Mucosa of descending colon (tissue), 3 donors: ENCODE measurements at regions of chr4 and their contacts with region 1.

Region 1: GRCh38 chr4:141350122-141350904 is 129.6 kb downstream of the ZNF330 start:
- DNase-seq: peak; percentile 54 to 92 (median 72)
- ATAC-seq: peak; percentile 97
- H3K4me3 ChIP-seq: no peak overlapping the region
- H3K4me1 ChIP-seq: peaks cover 4% of the 10 kb centered on the region
- CTCF ChIP-seq: no peak

Region 2: GRCh38 chr4:141220655-141221605 is 129.4 kb before region 1 on chr4 and contains the start of gene ZNF330:
- intact Hi-C with region 1: no loop called
- DNase-seq: peak; percentile 90 to 97 (median 96)
- ATAC-seq: peak; percentile 100
- H3K4me3 ChIP-seq: peak within 1 kb of the TSS; percentile 97
- H3K4me1 ChIP-seq: peaks cover 3% of the 10 kb centered on the region
- CTCF ChIP-seq: no peak
- total RNA-seq, gene ZNF330: 24.8 to 39.5 (median 24.9) TPM

Region 3: GRCh38 chr4:141294306-141294705 is 56.0 kb before region 1 on chr4:
- intact Hi-C with region 1: no loop called
- DNase-seq: no peak
- ATAC-seq: no peak
- H3K4me3 ChIP-seq: no peak overlapping the region
- H3K4me1 ChIP-seq: no peaks in the 10 kb centered on the region
- CTCF ChIP-seq: no peak

Region 4: DNA sequence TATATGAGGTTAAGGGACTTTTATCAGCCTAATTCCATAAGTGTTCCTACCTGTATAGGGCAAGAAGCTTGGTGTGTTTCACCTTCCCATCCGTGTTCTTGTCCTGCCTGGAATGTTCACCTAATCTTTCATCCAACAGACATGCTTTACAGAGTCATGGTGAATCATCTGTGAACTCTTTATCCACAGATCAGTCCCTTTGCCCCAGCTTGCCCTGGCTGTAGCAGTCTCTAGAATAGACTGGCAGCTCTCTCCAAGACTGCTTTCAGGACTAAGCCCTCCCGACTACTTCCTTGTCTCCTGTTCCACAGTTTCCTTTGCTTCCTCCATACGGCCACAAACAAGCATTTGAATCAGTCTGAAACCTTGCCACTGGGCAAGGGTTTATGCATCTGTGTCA is 108.2 kb after region 1 on chr4:
- intact Hi-C with region 1: no loop called
- DNase-seq: no peak
- ATAC-seq: no peak
- H3K4me3 ChIP-seq: no peak overlapping the region
- H3K4me1 ChIP-seq: no peaks in the 10 kb centered on the region
- CTCF ChIP-seq: no peak

Region 5: GRCh38 chr4:141676087-141676670 is 325.9 kb after region 1 on chr4:
- intact Hi-C with region 1: loop called in 1 of 2 experiments (anchors 5 kb)
- DNase-seq: peak in 1 of 3 donors; percentile 60
- ATAC-seq: peak; percentile 81
- H3K4me3 ChIP-seq: no peak overlapping the region
- H3K4me1 ChIP-seq: peaks cover 33% of the 10 kb centered on the region
- CTCF ChIP-seq: no peak

Region 6: DNA sequence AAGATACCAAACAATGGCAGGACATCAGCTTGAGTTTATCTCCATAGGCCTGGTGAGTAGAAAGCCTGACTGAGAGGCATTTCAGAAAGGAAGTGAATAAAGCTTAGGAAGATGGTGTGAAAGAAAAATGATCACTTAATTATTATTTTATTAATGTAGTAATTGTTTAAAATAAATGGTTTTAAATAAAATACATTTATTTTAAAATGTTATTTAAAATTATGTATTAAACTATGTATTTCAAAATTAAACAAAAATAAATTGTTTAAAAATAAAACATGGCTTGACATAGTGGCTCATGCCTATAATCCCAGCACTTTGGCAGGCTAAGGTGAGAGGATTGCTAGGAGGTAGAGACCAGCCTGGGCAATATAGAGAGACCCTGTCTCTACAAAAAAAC is 431.9 kb after region 1 on chr4:
- intact Hi-C with region 1: no loop called
- DNase-seq: no peak
- ATAC-seq: no peak
- H3K4me3 ChIP-seq: no peak overlapping the region
- H3K4me1 ChIP-seq: no peaks in the 10 kb centered on the region
- CTCF ChIP-seq: no peak